Lower leg skin (tissue), 4 donors: ENCODE measurements at regions of chr19 and their contacts with region 1.

Region 1: GRCh38 chr19:13881692-13882418 is 4.9 kb downstream of the NANOS3 start:
- DNase-seq: no peak
- H3K4me3 ChIP-seq: no peak overlapping the region
- CTCF ChIP-seq: no peak
- POLR2A ChIP-seq: no peak

Region 2: GRCh38 chr19:14073261-14073924 is 191.5 kb after region 1 on chr19:
- intact Hi-C with region 1: loop called (anchors 2 kb)
- DNase-seq: peak in 1 of 2 donors; percentile 56
- H3K4me3 ChIP-seq: peak overlapping the region; percentile 51
- CTCF ChIP-seq: no peak
- POLR2A ChIP-seq: no peak